ENCODE measurements at regions of chr11 and their contacts with region 1.

Region 1: GRCh38 chr11:3849297-3849874 is 6.1 kb upstream of the STIM1 start:
- DNase-seq: peak; percentile 57 to 70 (median 66)
- H3K4me3 ChIP-seq: no peak overlapping the region
- H3K4me3 Mint-ChIP-seq: peak overlapping the region in 1 of 8 donors; percentile 21
- H3K27ac ChIP-seq: no peak overlapping the region
- H3K27ac Mint-ChIP-seq: peak overlapping the region; percentile 4 to 76 (median 62)
- H3K4me1 ChIP-seq: peaks cover 30% of the 10 kb centered on the region
- H3K4me1 Mint-ChIP-seq: peaks cover 25 to 38% (median 30%) of the 10 kb centered on the region in 4 donors
- H3K27me3 ChIP-seq: no peaks in the 10 kb centered on the region
- H3K27me3 Mint-ChIP-seq: no peaks in the 10 kb centered on the region

Region 2: GRCh38 chr11:3735827-3736226 is 113.6 kb before region 1 on chr11:
- CTCF ChIA-PET with region 1: no interaction called
- POLR2A ChIA-PET with region 1: no interaction called
- intact Hi-C with region 1: no loop called
- DNase-seq: no peak
- H3K4me3 ChIP-seq: no peak overlapping the region
- H3K4me3 Mint-ChIP-seq: no peak overlapping the region
- H3K27ac ChIP-seq: no peak overlapping the region
- H3K27ac Mint-ChIP-seq: peak overlapping the region in 2 of 7 donors; percentile 2 to 47
- H3K4me1 ChIP-seq: no peaks in the 10 kb centered on the region
- H3K4me1 Mint-ChIP-seq: peaks cover 0 to 5% (median 3%) of the 10 kb centered on the region in 4 donors
- H3K27me3 ChIP-seq: no peaks in the 10 kb centered on the region
- H3K27me3 Mint-ChIP-seq: no peaks in the 10 kb centered on the region

Region 3: DNA sequence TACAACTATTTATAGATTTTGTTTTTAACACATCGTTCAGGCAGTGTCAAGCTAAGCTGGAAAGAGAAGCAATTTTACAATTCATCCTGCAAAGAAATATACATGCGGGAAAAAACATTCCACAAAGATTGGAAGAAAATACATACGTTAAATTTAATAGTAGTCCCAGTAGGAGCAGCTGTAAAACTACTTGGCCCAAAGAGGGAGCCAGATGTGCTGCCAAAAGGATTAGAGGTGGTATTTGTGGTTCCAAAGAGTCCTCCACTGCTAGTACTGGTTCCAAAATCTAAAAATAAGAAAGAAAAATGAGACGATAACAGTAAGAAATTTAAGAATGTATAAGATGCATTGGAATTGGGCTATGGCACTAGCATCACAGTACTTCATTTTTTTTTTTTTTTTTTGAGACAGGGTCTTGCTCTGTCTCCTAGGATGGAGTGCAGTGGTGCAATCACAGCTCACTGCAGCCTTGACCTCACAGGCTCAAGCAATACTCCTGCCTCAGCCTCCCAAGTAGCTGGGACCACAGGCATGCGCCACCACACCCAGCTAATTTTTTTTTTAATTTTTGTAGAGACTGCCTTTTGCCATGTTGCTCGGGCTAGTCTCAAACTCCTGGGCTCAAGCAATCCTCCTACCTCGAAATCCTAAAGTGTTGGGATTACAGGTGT is 73.5 kb before region 1 on chr11:
- CTCF ChIA-PET with region 1: no interaction called
- POLR2A ChIA-PET with region 1: no interaction called
- intact Hi-C with region 1: no loop called
- DNase-seq: no peak
- H3K4me3 ChIP-seq: no peak overlapping the region
- H3K4me3 Mint-ChIP-seq: no peak overlapping the region
- H3K27ac ChIP-seq: no peak overlapping the region
- H3K27ac Mint-ChIP-seq: no peak overlapping the region
- H3K4me1 ChIP-seq: no peaks in the 10 kb centered on the region
- H3K4me1 Mint-ChIP-seq: peaks cover 0 to 3% (median 1%) of the 10 kb centered on the region in 4 donors
- H3K27me3 ChIP-seq: no peaks in the 10 kb centered on the region
- H3K27me3 Mint-ChIP-seq: no peaks in the 10 kb centered on the region

Region 4: GRCh38 chr11:3824714-3825472 is 24.5 kb before region 1 on chr11:
- CTCF ChIA-PET with region 1: interaction called, 514 read pairs
- POLR2A ChIA-PET with region 1: interaction called, 221 read pairs
- intact Hi-C with region 1: no loop called
- DNase-seq: peak; percentile 75 to 85 (median 78)
- H3K4me3 ChIP-seq: no peak overlapping the region
- H3K4me3 Mint-ChIP-seq: peak overlapping the region in 4 of 8 donors; percentile 13 to 50 (median 34)
- H3K27ac ChIP-seq: peak overlapping the region; percentile 22
- H3K27ac Mint-ChIP-seq: peak overlapping the region; percentile 79 to 94 (median 89)
- H3K4me1 ChIP-seq: peaks cover 20% of the 10 kb centered on the region
- H3K4me1 Mint-ChIP-seq: peaks cover 20 to 47% (median 32%) of the 10 kb centered on the region in 4 donors
- H3K27me3 ChIP-seq: no peaks in the 10 kb centered on the region
- H3K27me3 Mint-ChIP-seq: no peaks in the 10 kb centered on the region

Region 5: DNA sequence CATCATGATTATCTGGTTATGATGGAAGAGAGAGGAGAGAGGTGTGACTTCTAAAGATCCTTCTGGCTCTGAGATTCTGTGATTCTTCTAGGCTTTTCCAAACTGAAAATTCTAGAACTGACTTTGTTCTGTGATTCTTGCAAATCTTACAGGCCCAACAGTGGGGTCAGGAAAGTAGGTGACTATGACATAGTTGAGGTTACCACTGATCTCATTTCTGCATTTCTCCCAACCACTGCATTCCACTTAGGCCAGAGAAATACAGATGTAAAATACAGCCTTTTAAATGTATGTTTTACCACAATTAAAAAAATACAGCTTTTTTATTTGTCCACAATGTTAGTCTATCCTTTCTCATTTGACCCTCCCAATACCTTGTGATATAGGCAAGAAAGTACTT is 89.8 kb after region 1 on chr11:
- CTCF ChIA-PET with region 1: interaction called, 48 read pairs
- POLR2A ChIA-PET with region 1: interaction called, 229 read pairs
- intact Hi-C with region 1: no loop called
- DNase-seq: no peak
- H3K4me3 ChIP-seq: no peak overlapping the region
- H3K4me3 Mint-ChIP-seq: no peak overlapping the region
- H3K27ac ChIP-seq: no peak overlapping the region
- H3K27ac Mint-ChIP-seq: peak overlapping the region; percentile 9 to 82 (median 77)
- H3K4me1 ChIP-seq: peaks cover 70% of the 10 kb centered on the region
- H3K4me1 Mint-ChIP-seq: peaks cover 63 to 85% (median 75%) of the 10 kb centered on the region in 4 donors
- H3K27me3 ChIP-seq: no peaks in the 10 kb centered on the region
- H3K27me3 Mint-ChIP-seq: no peaks in the 10 kb centered on the region

Region 6: GRCh38 chr11:3969613-3970012 is 120.2 kb after region 1 on chr11:
- CTCF ChIA-PET with region 1: interaction called, 24 read pairs
- POLR2A ChIA-PET with region 1: interaction called, 8 read pairs
- intact Hi-C with region 1: no loop called
- DNase-seq: peak in 2 of 5 donors; percentile 13 to 22
- H3K4me3 ChIP-seq: no peak overlapping the region
- H3K4me3 Mint-ChIP-seq: peak overlapping the region; percentile 1 to 80 (median 36)
- H3K27ac ChIP-seq: no peak overlapping the region
- H3K27ac Mint-ChIP-seq: peak overlapping the region; percentile 0 to 90 (median 57)
- H3K4me1 ChIP-seq: peaks cover 47% of the 10 kb centered on the region
- H3K4me1 Mint-ChIP-seq: peaks cover 54 to 82% (median 69%) of the 10 kb centered on the region in 4 donors
- H3K27me3 ChIP-seq: no peaks in the 10 kb centered on the region
- H3K27me3 Mint-ChIP-seq: no peaks in the 10 kb centered on the region

Region 7: DNA sequence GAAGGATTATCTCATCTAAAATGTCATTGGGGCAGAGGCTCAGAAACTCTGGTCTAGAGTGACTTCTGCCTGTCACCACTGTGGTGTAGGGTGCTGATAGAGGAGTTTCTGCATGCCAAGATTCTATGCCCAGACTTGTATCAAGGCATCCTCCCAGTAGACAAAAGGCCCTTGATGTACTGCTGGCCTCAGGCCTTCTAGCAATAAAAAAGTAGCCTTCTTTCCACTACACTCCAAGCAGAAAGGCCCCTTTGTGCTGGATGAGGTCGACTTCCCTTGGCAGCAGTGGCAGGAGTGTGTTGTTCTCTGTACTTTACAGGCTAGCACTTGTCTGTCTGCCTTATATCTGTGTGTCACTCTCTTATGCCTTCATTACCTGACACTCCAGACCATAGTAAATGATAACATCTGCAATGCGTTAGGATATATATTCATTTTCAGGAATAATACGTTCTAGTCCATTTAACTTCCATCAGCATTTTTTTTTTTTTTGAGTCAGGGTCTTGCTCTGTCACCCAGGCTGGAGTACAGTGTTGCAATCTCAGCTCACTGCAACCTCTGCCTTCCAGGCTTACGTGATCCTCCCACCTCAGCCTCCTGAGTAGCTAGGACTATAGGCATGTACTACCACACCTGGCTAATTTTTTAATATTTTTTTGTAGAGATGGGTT is 195.7 kb after region 1 on chr11:
- CTCF ChIA-PET with region 1: interaction called, 15 read pairs
- POLR2A ChIA-PET with region 1: interaction called, 25 read pairs
- intact Hi-C with region 1: no loop called
- DNase-seq: no peak
- H3K4me3 ChIP-seq: no peak overlapping the region
- H3K4me3 Mint-ChIP-seq: no peak overlapping the region
- H3K27ac ChIP-seq: no peak overlapping the region
- H3K27ac Mint-ChIP-seq: peak overlapping the region in 6 of 7 donors; percentile 11 to 84 (median 42)
- H3K4me1 ChIP-seq: peaks cover 10% of the 10 kb centered on the region
- H3K4me1 Mint-ChIP-seq: peaks cover 24 to 39% (median 31%) of the 10 kb centered on the region in 4 donors
- H3K27me3 ChIP-seq: no peaks in the 10 kb centered on the region
- H3K27me3 Mint-ChIP-seq: no peaks in the 10 kb centered on the region

Region 8: GRCh38 chr11:5684646-5685362 is 1835.4 kb after region 1 on chr11 and contains the start of gene TRIM5:
- CTCF ChIA-PET with region 1: no interaction called
- POLR2A ChIA-PET with region 1: no interaction called
- intact Hi-C with region 1: no loop called
- DNase-seq: peak; percentile 79 to 90 (median 81)
- H3K4me3 ChIP-seq: peak within 1 kb of the TSS; percentile 65 to 100
- H3K4me3 Mint-ChIP-seq: peak within 1 kb of the TSS; percentile 91 to 97 (median 95)
- H3K27ac ChIP-seq: peak within 1 kb of the TSS; percentile 83
- H3K27ac Mint-ChIP-seq: peak within 1 kb of the TSS; percentile 94 to 98 (median 97)
- H3K4me1 ChIP-seq: peaks cover 33% of the 10 kb centered on the region
- H3K4me1 Mint-ChIP-seq: peaks cover 40 to 69% (median 54%) of the 10 kb centered on the region in 4 donors
- H3K27me3 ChIP-seq: no peaks in the 10 kb centered on the region
- H3K27me3 Mint-ChIP-seq: no peaks in the 10 kb centered on the region
- total RNA-seq, gene TRIM5: 33.9 to 35.5 TPM

Measured in CD4-positive, alpha-beta memory T cell (primary cell).